RWPE1 (cell line): ENCODE measurements at regions of chr5 and their contacts with region 1.

Region 1: DNA sequence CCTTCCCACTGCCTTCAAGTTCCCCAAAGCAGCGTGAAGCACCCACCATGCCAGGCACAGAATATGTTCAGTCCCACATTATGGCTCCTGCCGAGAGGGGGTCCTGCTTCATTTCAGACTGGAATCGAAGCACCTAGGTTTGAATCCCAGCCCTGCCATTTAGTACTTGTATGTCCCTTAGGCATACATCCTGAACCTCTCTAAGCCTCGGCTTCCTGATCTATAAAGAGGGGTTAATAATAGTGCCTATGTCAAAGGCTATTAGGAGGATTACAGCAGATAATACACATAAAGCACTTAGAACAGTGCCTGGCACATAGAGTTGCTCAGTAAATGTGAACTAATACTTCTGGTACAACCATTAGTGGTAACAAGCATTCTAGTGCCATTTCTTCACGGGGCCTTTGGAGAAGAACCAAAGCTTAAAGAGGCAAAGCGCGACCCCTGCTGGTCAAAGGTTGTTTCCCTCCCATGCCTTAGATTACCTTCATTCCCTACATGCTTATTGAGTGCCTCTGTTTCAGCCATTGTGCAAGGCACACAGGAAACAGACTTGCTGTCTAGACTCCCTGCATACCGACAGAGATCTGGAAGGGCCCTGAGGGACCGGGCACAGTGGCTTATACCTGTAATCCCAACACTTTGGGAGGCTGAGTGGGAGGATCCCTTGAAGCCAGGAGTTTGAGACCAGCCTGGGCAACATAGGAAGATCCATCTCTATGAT is 98.2 kb downstream of the PPARGC1B start:
- DNase-seq: peak; percentile 93
- H3K27ac ChIP-seq: peak overlapping the region; percentile 61
- CTCF ChIP-seq: peak; percentile 91

Region 2: GRCh38 chr5:149636851-149637246 is 191.5 kb before region 1 on chr5:
- CTCF ChIA-PET with region 1: interaction called, 130 read pairs
- POLR2A ChIA-PET with region 1: no interaction called
- DNase-seq: peak; percentile 75
- H3K27ac ChIP-seq: peak overlapping the region; percentile 67; the same call in 1 of the 2 replicates
- CTCF ChIP-seq: peak; percentile 94

Region 3: GRCh38 chr5:149656576-149657182 is 171.6 kb before region 1 on chr5:
- CTCF ChIA-PET with region 1: interaction called, 20 read pairs
- POLR2A ChIA-PET with region 1: no interaction called
- DNase-seq: no peak
- H3K27ac ChIP-seq: no peak overlapping the region
- CTCF ChIP-seq: peak; percentile 73

Region 4: GRCh38 chr5:149667084-149667828 is 161.1 kb before region 1 on chr5:
- CTCF ChIA-PET with region 1: interaction called, 12 read pairs
- POLR2A ChIA-PET with region 1: no interaction called
- DNase-seq: peak; percentile 54
- H3K27ac ChIP-seq: no peak overlapping the region
- CTCF ChIP-seq: peak; percentile 88

Region 5: DNA sequence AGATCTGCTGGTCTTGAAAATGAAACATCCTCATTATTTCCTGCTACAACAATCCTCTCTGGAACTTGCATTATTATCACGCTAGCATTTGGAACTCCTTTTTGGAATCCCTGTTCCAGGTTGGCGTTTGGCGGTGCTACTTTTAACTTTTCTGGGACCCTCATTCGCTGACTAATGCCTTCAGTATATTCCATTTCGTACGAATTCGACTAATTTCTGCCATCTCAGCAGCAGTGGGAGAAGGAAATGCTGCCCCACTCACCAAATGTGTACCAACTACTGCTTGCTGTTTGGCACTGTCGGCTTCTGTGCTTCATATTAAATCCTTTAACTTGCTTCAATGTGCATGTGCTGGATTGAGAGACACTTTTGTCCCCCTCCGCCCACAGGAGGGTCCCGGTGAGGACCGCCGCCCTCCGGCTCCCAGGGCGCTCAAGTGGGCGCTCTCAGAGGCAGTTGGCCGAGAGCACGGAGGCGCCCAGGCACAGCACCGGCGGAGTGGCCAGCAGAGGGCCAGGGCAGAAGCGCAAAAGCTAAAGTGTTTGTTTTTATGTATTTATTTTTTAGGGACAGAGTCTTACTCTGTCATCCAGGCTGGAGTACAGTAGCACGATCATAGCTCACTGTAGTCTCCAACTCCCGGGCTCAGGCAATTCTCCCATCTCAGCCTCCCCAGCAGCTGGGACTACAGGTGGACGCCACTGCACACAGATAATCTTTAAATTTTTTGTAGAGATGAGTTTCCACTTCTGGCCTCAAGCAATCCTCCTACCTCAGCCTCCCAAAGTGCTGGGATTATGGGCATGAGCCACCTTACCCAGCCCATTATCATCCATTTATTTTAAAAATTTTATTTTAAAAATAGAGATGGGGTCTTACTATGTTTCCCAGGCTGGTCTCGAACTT is 104.4 kb after region 1 on chr5:
- CTCF ChIA-PET with region 1: no interaction called
- POLR2A ChIA-PET with region 1: no interaction called
- DNase-seq: no peak
- H3K27ac ChIP-seq: no peak overlapping the region
- CTCF ChIP-seq: no peak